Activated CD4-positive, alpha-beta T cell treated with anti-CD3 and anti-CD28 coated beads for 36 hours (primary cell): ENCODE measurements at regions of chr1 and their contacts with region 1.

Region 1: GRCh38 chr1:149899460-149900293 is at the start of gene BOLA1:
- DNase-seq: peak; percentile 91
- ATAC-seq: peak; percentile 99
- H3K4me3 Mint-ChIP-seq: peak within 1 kb of the TSS; percentile 89
- H3K27ac Mint-ChIP-seq: peak within 1 kb of the TSS; percentile 95
- H3K4me1 Mint-ChIP-seq: peaks cover 18% of the 10 kb centered on the region
- H3K27me3 Mint-ChIP-seq: no peaks in the 10 kb centered on the region
- total RNA-seq, gene BOLA1: 24.1 to 30.0 TPM

Region 2: DNA sequence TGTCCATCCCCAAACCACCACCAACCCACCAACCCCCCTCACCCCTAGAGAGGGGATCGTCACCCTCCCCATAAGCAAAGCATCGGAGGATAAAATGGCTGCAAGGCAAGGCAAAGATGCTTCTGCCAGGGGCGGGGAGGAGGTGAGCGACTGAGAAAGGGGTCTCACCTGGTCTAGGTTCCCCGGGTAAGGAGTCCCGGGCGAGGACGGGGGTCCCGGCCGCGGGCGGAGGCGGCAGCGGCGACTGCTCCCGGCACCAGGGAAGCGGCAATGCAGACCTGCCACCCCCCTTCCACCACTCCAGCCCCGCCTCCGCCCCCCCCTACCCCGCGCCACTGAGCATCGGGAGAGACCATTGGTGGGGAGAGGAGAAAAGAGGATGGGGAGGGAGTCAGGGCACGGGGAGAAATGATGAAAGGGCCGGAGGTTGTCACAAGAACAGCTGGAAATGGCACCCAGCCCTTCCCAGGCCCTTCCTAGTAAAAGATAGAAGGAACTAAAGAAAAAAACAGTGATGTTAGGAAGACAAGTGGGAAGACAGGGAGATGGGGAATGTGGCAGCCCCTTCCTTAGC is 18.0 kb after region 1 on chr1 and contains the start of gene SV2A:
- CTCF ChIA-PET with region 1: interaction called, 4 read pairs
- POLR2A ChIA-PET with region 1: no interaction called
- intact Hi-C with region 1: loop called in 1 of 2 experiments (anchors 1 kb)
- DNase-seq: peak; percentile 71
- ATAC-seq: peak; percentile 85
- H3K4me3 Mint-ChIP-seq: peak within 1 kb of the TSS; percentile 78
- H3K27ac Mint-ChIP-seq: no peak within 1 kb of the TSS
- H3K4me1 Mint-ChIP-seq: peaks cover 19% of the 10 kb centered on the region
- H3K27me3 Mint-ChIP-seq: peaks cover 2% of the 10 kb centered on the region
- total RNA-seq, gene SV2A: 7.8 to 8.5 TPM

Region 3: GRCh38 chr1:149927503-149928387 is 28.1 kb after region 1 on chr1 and contains the start of gene SF3B4:
- CTCF ChIA-PET with region 1: no interaction called
- POLR2A ChIA-PET with region 1: no interaction called
- intact Hi-C with region 1: loop called (anchors 1 kb)
- DNase-seq: peak; percentile 97
- ATAC-seq: peak; percentile 97
- H3K4me3 Mint-ChIP-seq: peak within 1 kb of the TSS; percentile 97
- H3K27ac Mint-ChIP-seq: peak within 1 kb of the TSS; percentile 96
- H3K4me1 Mint-ChIP-seq: peaks cover 43% of the 10 kb centered on the region
- H3K27me3 Mint-ChIP-seq: peaks cover 3% of the 10 kb centered on the region
- total RNA-seq, gene SF3B4: 68.6 to 71.9 TPM

Region 4: GRCh38 chr1:149962123-149962548 is 62.5 kb after region 1 on chr1:
- CTCF ChIA-PET with region 1: interaction called, 4 read pairs
- POLR2A ChIA-PET with region 1: no interaction called
- intact Hi-C with region 1: loop called in 1 of 2 experiments (anchors 2 kb)
- DNase-seq: peak; percentile 52
- ATAC-seq: peak; percentile 71
- H3K4me3 Mint-ChIP-seq: no peak overlapping the region
- H3K27ac Mint-ChIP-seq: no peak overlapping the region
- H3K4me1 Mint-ChIP-seq: peaks cover 13% of the 10 kb centered on the region
- H3K27me3 Mint-ChIP-seq: no peaks in the 10 kb centered on the region

Region 5: DNA sequence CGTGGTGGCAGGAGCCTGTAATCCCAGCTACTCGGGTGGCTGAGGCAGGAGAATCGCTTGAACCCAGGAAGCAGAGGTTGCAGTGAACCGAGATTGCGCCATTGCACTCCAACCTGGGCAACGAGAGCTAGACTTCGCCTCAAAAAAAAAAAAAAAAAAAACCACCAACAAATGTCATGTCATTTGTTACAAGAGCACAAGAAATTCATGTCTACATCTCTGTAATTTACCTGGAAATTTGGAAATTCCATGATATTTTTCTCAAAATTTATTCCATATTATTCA is 151.4 kb after region 1 on chr1:
- CTCF ChIA-PET with region 1: no interaction called
- POLR2A ChIA-PET with region 1: no interaction called
- intact Hi-C with region 1: loop called in 1 of 2 experiments (anchors 2 kb)
- DNase-seq: no peak
- ATAC-seq: no peak
- H3K4me3 Mint-ChIP-seq: no peak overlapping the region
- H3K27ac Mint-ChIP-seq: no peak overlapping the region
- H3K4me1 Mint-ChIP-seq: peaks cover 2% of the 10 kb centered on the region
- H3K27me3 Mint-ChIP-seq: peaks cover 3% of the 10 kb centered on the region

Region 6: GRCh38 chr1:150102986-150103385 is 203.3 kb after region 1 on chr1:
- CTCF ChIA-PET with region 1: no interaction called
- POLR2A ChIA-PET with region 1: interaction called, 11 read pairs
- intact Hi-C with region 1: no loop called
- DNase-seq: no peak
- ATAC-seq: no peak
- H3K4me3 Mint-ChIP-seq: no peak overlapping the region
- H3K27ac Mint-ChIP-seq: no peak overlapping the region
- H3K4me1 Mint-ChIP-seq: peaks cover 48% of the 10 kb centered on the region
- H3K27me3 Mint-ChIP-seq: no peaks in the 10 kb centered on the region

Region 7: DNA sequence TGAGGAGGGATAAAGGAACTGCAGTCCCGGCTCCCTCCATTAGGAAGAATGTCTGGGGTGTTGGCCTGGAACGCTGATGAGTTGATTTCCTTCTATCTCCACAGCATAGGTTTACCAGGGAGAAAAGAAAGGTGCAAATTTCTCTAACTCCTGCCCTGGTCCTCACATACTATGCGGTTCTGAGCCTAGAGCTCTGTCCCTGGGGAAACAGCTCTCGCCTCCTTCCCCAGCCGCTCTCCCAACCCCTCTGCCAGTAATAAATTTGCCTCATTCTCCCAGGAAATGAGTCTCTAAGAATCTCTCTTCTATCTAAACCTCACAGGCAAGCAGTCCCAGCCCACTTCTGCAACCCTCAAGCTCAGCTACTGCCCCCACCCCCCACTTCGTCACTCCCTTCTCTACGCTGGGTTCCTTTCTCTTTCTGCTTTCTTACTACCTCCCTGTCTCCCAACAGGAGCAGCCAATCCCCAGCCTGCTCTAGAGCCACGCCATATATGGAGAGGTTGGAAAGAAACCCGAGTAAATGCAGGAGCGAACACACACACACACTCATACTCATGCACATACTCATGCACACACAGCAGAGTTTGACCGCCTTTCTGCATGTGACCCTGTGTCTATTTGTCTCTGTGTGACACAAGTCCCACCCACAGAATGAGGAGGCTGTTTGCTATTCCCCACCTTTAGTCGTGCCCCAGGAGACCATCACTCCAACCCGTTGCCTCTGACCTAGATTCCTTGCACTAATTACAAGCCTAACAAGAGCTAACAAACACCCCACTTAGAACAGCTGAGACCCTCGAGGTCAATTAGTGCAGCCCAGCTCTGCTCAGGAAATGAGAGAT is 263.4 kb after region 1 on chr1:
- CTCF ChIA-PET with region 1: no interaction called
- POLR2A ChIA-PET with region 1: no interaction called
- intact Hi-C with region 1: loop called in 1 of 2 experiments (anchors 10 kb)
- DNase-seq: peak; percentile 60
- ATAC-seq: peak; percentile 63
- H3K4me3 Mint-ChIP-seq: no peak overlapping the region
- H3K27ac Mint-ChIP-seq: no peak overlapping the region
- H3K4me1 Mint-ChIP-seq: peaks cover 39% of the 10 kb centered on the region
- H3K27me3 Mint-ChIP-seq: no peaks in the 10 kb centered on the region